AG04450 (cell line): ENCODE measurements at regions of chr5 and their contacts with region 1.

Region 1: GRCh38 chr5:149828161-149828884 is 98.2 kb downstream of the PPARGC1B start:
- DNase-seq: peak; percentile 85
- H3K4me3 ChIP-seq: no peak overlapping the region
- H3K27ac ChIP-seq: no peak overlapping the region
- H3K27me3 ChIP-seq: no peaks in the 10 kb centered on the region
- CTCF ChIP-seq: peak; percentile 89

Region 2: DNA sequence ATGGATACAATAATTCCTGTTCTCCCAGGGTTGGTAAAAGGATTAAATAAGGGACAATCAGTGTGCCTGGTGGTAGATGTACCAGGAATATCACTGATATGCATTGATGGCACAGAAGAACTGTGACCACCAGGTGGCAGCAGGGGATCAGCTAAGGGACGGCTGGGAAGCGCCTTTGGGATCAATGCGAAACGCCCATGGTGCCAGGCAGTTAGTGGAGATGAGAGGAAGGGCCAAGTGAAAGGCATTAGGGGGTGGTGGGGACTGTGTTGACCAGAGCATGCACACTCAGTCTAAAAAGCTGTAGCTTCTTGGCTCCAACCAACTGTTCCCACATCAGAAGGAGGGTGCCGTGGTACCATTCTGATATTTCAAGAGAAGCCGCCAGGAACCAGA is 191.5 kb before region 1 on chr5:
- CTCF ChIA-PET with region 1: interaction called, 282 read pairs
- POLR2A ChIA-PET with region 1: interaction called, 6 read pairs
- DNase-seq: peak; percentile 48
- H3K4me3 ChIP-seq: no peak overlapping the region
- H3K27ac ChIP-seq: no peak overlapping the region
- H3K27me3 ChIP-seq: no peaks in the 10 kb centered on the region
- CTCF ChIP-seq: peak; percentile 86

Region 3: DNA sequence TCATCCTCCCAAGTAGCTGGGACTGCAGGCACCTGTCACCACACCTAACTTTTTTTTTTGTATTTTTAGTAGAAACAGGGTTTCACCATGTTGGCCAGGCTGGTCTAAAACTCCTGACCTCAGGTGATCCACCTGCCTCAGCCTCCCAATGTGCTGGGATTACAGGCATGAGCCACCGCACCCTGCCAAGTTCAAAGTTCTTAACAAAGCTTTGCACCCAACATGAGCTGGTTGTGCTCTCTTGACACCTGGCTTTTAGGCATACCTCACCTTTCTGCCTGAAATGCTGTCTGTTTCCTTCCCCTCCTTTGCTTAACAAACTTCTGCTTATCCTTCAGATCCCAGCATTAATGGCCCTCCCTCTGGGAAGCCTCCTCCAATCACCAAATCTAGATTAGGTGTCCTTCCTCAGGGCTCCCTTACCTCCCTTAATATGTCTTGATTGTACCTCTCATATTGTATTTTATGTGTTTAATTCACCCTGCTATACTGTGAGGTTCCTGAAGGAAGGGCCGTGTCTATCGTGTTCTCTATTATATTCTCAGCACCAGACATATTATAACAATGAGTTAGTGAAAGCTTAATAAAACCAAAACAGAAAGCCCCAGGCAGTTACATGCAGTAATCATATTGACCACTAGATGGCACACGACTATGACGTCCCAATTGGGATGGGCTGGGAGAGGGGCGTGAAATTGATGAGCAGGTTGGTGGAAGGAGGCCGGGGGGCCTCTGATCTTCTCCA is 161.1 kb before region 1 on chr5:
- CTCF ChIA-PET with region 1: interaction called, 47 read pairs
- POLR2A ChIA-PET with region 1: no interaction called
- DNase-seq: no peak
- H3K4me3 ChIP-seq: no peak overlapping the region
- H3K27ac ChIP-seq: no peak overlapping the region
- H3K27me3 ChIP-seq: peaks cover 7% of the 10 kb centered on the region
- CTCF ChIP-seq: peak; percentile 79

Region 4: GRCh38 chr5:149775785-149776184 is 52.5 kb before region 1 on chr5:
- CTCF ChIA-PET with region 1: no interaction called
- POLR2A ChIA-PET with region 1: no interaction called
- DNase-seq: no peak
- H3K4me3 ChIP-seq: no peak overlapping the region
- H3K27ac ChIP-seq: no peak overlapping the region
- H3K27me3 ChIP-seq: peaks cover 13% of the 10 kb centered on the region
- CTCF ChIP-seq: peak; percentile 26; the same call in 1 of the 2 replicates

Region 5: DNA sequence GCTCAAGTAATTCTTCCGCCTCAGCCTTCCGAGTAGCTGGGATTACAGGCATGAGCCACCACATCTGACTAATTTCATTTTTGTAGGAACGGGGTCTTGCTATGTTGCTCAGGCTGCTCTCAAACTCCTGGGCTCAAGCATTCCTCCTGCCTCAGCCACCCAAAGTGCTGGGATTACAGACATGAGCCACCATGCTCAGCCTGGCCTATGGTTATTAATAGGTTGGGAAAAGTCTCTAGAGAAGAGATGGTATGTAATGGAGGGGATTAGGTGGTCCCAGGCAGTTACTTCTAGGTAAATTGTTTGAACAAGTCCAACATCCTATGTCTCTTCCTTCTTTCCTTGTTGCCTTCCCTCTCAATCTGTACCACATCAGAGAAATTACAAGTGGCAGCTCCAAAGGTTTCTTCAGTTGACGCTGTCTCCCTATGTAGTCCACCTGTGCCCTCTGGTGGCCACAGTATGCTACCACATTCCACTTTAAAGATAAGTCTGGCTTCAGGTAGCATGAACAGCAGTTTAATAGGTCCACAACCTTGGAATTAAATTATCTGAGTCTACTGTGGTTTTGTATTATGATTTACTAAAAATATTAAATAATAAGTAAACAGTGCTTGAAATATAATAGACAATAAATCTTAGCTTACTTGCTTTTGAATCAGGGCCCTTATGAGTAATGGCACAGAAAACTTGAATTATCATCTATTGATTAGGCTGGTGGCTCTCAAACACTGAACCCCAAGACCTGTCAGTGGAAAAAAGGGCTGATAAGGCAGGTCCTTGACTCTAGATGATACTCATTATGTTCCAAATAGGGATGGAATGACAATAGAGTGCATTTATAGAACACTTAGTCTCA is 162.4 kb after region 1 on chr5:
- CTCF ChIA-PET with region 1: interaction called, 478 read pairs
- POLR2A ChIA-PET with region 1: interaction called, 8 read pairs
- DNase-seq: peak; percentile 56
- H3K4me3 ChIP-seq: no peak overlapping the region
- H3K27ac ChIP-seq: no peak overlapping the region
- H3K27me3 ChIP-seq: no peaks in the 10 kb centered on the region
- CTCF ChIP-seq: peak; percentile 98

Region 6: GRCh38 chr5:150101023-150101422 is 272.7 kb after region 1 on chr5:
- CTCF ChIA-PET with region 1: no interaction called
- POLR2A ChIA-PET with region 1: no interaction called
- DNase-seq: no peak
- H3K4me3 ChIP-seq: no peak overlapping the region
- H3K27ac ChIP-seq: no peak overlapping the region
- H3K27me3 ChIP-seq: peaks cover 3% of the 10 kb centered on the region
- CTCF ChIP-seq: no peak